ENCODE measurements at regions of chr22 and their contacts with region 1.

Region 1: GRCh38 chr22:19629720-19630419 is 84.4 kb upstream of the SEPTIN5 start:
- DNase-seq: peak; percentile 80
- H3K4me3 ChIP-seq: no peak overlapping the region
- H3K27ac ChIP-seq: no peak overlapping the region
- H3K4me1 ChIP-seq: no peaks in the 10 kb centered on the region
- H3K27me3 ChIP-seq: peaks cover 0 to 5% of the 10 kb centered on the region in 2 experiments
- CTCF ChIP-seq: peak; percentile 91 to 92
- POLR2A ChIP-seq: no peak

Region 2: DNA sequence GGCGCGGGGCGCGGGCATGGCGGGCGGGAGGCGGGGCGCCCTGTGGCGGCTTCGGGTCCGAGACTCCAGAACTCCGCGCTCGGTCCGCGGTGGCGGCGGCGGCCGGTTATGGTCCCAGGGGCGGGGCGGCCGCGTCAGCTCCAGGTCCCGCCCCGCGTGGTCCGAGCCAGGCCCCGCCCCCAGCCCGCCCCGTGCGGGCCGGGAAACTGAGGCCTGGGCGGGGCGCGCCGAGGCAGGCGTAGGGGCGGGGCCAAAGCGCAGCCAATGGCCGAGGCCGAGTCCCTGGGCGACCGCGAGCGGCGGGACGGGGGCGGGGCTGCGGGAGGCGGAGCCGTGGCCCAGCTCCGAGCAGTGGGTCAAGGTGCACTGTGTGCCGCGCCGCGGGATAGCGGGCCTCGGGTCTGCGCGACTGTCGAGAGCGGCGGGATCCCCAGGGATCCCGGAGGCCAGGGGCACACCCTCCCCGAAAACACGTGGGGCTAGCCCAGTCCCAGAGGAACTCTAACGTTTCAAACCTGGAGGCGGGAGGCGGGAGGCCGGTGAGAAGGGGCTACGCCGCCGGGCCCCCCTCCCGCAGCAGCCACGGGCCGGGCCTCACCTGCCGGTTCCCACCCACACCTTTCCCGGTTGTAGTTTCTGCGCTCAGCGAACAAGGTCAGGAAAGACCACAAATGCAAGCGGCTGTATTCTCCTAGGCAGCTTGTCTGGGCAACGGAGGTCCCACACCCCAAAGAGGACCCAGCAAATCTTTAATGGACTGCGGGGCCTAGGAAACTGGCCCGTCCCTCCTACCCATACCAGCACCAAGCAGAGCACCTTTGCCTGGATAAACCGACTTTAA is 451.0 kb before region 1 on chr22 and contains the start of gene SLC25A1:
- CTCF ChIA-PET with region 1: interaction called, 25 read pairs
- POLR2A ChIA-PET with region 1: no interaction called
- dilution Hi-C with region 1: no loop called
- intact Hi-C with region 1: loop called (anchors 1 kb)
- DNase-seq: peak; percentile 88
- H3K4me3 ChIP-seq: peak within 1 kb of the TSS; percentile 60 to 89 (median 68)
- H3K27ac ChIP-seq: peak within 1 kb of the TSS; percentile 56
- H3K4me1 ChIP-seq: peaks cover 7% of the 10 kb centered on the region
- H3K27me3 ChIP-seq: no peaks in the 10 kb centered on the region
- CTCF ChIP-seq: no peak
- POLR2A ChIP-seq: peak; percentile 31
- total RNA-seq, gene SLC25A1: 94.5 and 102 TPM in 2 replicates

Region 3: GRCh38 chr22:19473578-19473977 is 156.3 kb before region 1 on chr22:
- CTCF ChIA-PET with region 1: interaction called, 67 read pairs
- POLR2A ChIA-PET with region 1: no interaction called
- dilution Hi-C with region 1: no loop called
- intact Hi-C with region 1: loop called (anchors 1 kb)
- DNase-seq: no peak
- H3K4me3 ChIP-seq: no peak overlapping the region
- H3K27ac ChIP-seq: no peak overlapping the region
- H3K4me1 ChIP-seq: peaks cover 11% of the 10 kb centered on the region
- H3K27me3 ChIP-seq: no peaks in the 10 kb centered on the region
- CTCF ChIP-seq: no peak
- POLR2A ChIP-seq: no peak

Region 4: DNA sequence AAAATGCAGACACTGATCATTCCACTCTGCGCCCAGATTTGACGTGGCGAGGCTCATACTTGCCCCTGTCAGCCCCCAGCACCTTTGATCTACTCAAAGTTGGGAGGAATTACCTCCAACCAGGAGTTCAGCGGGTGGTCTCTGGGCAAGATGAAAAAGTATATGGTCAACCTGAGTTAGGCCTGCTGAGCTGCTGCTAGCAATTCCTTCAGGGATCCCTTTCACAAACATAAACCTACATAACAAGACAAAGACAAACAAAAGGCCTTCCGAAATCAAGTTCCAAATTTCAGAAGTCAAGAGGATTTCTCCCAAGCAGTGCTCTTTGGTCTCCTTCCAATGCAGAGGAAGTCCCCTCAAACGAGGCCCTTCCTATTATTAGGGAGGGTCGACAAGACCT is 126.5 kb before region 1 on chr22:
- CTCF ChIA-PET with region 1: interaction called, 358 read pairs
- POLR2A ChIA-PET with region 1: no interaction called
- dilution Hi-C with region 1: no loop called
- intact Hi-C with region 1: no loop called
- DNase-seq: no peak
- H3K4me3 ChIP-seq: no peak overlapping the region
- H3K27ac ChIP-seq: no peak overlapping the region
- H3K4me1 ChIP-seq: no peaks in the 10 kb centered on the region
- H3K27me3 ChIP-seq: no peaks in the 10 kb centered on the region
- CTCF ChIP-seq: no peak
- POLR2A ChIP-seq: no peak

Region 5: GRCh38 chr22:19576460-19577421 is 53.1 kb before region 1 on chr22:
- CTCF ChIA-PET with region 1: interaction called, 13 read pairs
- POLR2A ChIA-PET with region 1: no interaction called
- dilution Hi-C with region 1: no loop called
- intact Hi-C with region 1: no loop called
- DNase-seq: peak; percentile 90
- H3K4me3 ChIP-seq: no peak overlapping the region
- H3K27ac ChIP-seq: peak overlapping the region; percentile 75
- H3K4me1 ChIP-seq: peaks cover 47% of the 10 kb centered on the region
- H3K27me3 ChIP-seq: no peaks in the 10 kb centered on the region
- CTCF ChIP-seq: no peak
- POLR2A ChIP-seq: peak; percentile 70

Region 6: GRCh38 chr22:19661156-19661555 is 31.3 kb after region 1 on chr22:
- CTCF ChIA-PET with region 1: no interaction called
- POLR2A ChIA-PET with region 1: no interaction called
- dilution Hi-C with region 1: no loop called
- intact Hi-C with region 1: no loop called
- DNase-seq: no peak
- H3K4me3 ChIP-seq: no peak overlapping the region
- H3K27ac ChIP-seq: no peak overlapping the region
- H3K4me1 ChIP-seq: no peaks in the 10 kb centered on the region
- H3K27me3 ChIP-seq: peaks cover 0 to 5% of the 10 kb centered on the region in 2 experiments
- CTCF ChIP-seq: no peak
- POLR2A ChIP-seq: no peak

Region 7: DNA sequence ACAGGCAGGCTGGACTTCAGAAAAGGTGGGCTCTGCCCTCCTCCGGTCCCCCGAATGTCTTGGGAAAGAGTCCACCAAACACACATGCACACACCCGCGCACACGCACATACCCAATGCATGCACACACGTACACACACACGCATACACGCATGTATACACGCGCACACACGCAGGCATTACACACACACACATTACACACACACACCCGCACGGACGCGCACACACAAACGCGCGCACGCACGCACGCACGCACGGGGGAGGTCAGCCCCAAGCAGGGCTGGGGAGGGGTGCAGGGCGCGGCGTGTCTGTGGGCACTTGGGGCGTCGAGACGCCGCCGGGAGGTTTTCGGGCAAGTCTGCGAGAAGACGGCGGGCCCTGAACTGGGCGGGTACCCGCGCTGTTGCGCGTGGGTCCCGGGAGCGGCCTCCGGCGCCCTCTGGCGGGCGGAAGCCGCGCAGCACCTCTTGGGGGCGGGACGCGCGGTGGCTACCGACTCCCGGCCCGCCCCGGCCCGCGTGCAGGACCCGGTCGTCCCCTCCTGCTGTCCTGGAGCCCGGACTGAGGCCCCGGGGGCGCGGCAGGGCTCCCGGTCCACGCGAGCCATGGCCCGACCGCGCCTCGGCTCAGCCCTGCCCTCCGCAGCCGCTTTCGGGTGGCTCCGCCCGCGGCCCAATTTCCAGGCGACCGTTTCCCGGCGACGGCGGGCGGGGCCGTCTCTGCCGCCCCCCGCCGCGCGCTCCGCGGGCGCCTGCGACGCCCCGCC is 88.0 kb after region 1 on chr22:
- CTCF ChIA-PET with region 1: interaction called, 6 read pairs
- POLR2A ChIA-PET with region 1: no interaction called
- dilution Hi-C with region 1: no loop called
- intact Hi-C with region 1: loop called (anchors 1 kb)
- DNase-seq: peak; percentile 62
- H3K4me3 ChIP-seq: peak overlapping the region; percentile 13 to 51 (median 39)
- H3K27ac ChIP-seq: no peak overlapping the region
- H3K4me1 ChIP-seq: peaks cover 18% of the 10 kb centered on the region
- H3K27me3 ChIP-seq: no peaks in the 10 kb centered on the region
- CTCF ChIP-seq: peak; percentile 73 to 92
- POLR2A ChIP-seq: no peak

Region 8: GRCh38 chr22:19742160-19743066 is 112.5 kb after region 1 on chr22:
- CTCF ChIA-PET with region 1: no interaction called
- POLR2A ChIA-PET with region 1: no interaction called
- dilution Hi-C with region 1: no loop called
- intact Hi-C with region 1: no loop called
- DNase-seq: no peak
- H3K4me3 ChIP-seq: no peak overlapping the region
- H3K27ac ChIP-seq: no peak overlapping the region
- H3K4me1 ChIP-seq: peaks cover 9% of the 10 kb centered on the region
- H3K27me3 ChIP-seq: no peaks in the 10 kb centered on the region
- CTCF ChIP-seq: no peak
- POLR2A ChIP-seq: no peak

Region 9: DNA sequence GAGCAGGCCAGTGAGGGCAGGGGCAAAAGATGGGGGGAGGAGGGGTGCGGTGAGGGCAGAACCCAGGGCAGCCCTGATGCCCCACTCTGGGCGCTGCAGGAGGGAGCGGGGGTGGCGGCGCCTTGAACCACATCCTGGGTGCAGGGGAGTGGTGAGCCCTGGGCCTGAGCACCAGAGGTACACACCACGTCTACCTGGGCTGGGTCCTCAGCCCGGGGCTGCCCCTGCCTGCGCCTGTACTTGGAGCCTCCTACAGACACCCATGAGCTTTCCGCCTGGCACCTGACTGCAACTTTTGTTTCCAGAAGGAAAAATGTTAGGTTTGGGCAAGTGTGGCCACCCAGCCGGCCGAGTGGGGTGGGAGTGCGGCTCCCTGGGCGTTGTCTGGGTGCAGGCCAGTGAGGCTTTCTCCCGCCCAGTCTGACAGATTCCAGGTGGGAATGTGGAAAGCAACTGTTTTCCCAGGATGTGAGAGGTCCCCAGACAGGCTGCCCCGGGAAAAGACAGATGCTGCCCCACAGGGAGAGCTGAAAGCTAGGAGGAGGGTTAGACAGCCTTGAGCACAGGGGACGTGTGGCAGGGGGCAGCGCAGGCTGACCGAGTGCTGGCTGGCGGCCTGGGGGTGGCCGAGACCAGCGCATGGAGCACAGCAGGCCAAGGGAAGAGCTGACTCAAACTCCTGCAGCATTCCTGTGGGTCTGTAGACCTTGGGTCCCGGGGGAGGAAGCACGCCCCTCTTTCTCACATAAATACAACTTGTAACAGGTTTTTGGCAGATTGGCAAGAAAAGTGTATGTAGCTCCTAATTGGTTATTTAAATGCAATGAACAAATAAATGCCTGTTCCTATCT is 180.7 kb after region 1 on chr22:
- CTCF ChIA-PET with region 1: no interaction called
- POLR2A ChIA-PET with region 1: no interaction called
- dilution Hi-C with region 1: no loop called
- intact Hi-C with region 1: no loop called
- DNase-seq: peak; percentile 4
- H3K4me3 ChIP-seq: no peak overlapping the region
- H3K27ac ChIP-seq: no peak overlapping the region
- H3K4me1 ChIP-seq: peaks cover 13% of the 10 kb centered on the region
- H3K27me3 ChIP-seq: no peaks in the 10 kb centered on the region
- CTCF ChIP-seq: no peak
- POLR2A ChIP-seq: no peak